ENCODE measurements at regions of chr6 and their contacts with region 1.

Region 1: GRCh38 chr6:27157459-27158315 is 89.8 kb upstream of the PRSS16 start:
- DNase-seq: peak; percentile 70
- ATAC-seq: peak; percentile 87 to 92

Region 2: DNA sequence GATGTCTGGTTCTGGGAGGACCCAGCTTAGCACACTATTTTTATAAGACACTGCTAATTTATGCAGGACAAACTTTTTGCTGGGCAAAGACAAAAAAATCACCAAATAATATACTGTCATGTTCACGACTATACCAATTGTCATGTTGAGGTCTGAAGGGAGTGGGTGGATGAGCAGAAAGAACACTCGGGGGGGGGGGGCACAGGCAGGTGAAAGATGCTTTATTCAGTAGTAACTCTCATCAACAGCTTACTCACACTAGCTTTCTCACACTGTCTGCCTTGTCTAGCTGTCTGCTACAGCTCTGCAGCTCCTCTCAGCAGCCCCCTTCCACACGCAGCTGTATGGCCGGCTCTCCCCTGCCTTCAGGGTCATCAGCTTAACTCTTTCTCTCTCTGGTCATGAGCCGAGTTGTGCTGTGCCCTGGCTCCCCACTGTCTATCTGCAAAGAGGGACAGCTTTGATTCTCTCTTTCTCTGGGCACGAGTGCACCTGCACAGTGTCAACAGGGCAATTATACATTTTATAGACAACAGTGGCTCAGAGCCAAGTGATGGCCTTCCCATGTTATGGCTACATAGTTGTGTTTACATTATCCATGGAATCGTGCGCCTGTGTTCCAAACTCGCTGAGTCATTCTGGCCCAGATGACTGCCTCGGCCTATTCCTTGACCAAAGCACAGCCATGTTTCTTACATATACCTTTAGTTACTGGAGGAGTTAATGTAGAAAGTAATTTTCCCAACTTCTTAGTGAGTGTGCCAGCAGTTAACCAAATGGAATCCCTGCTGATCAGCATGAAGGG is 97.9 kb before region 1 on chr6:
- intact Hi-C with region 1: no loop called
- DNase-seq: no peak
- ATAC-seq: no peak

Region 3: GRCh38 chr6:27126815-27127537 is 30.7 kb before region 1 on chr6:
- intact Hi-C with region 1: loop called in 1 of 2 experiments (anchors 1 kb)
- DNase-seq: peak; percentile 93
- ATAC-seq: peak; percentile 91